ENCODE measurements at regions of chr11 and their contacts with region 1.

Region 1: DNA sequence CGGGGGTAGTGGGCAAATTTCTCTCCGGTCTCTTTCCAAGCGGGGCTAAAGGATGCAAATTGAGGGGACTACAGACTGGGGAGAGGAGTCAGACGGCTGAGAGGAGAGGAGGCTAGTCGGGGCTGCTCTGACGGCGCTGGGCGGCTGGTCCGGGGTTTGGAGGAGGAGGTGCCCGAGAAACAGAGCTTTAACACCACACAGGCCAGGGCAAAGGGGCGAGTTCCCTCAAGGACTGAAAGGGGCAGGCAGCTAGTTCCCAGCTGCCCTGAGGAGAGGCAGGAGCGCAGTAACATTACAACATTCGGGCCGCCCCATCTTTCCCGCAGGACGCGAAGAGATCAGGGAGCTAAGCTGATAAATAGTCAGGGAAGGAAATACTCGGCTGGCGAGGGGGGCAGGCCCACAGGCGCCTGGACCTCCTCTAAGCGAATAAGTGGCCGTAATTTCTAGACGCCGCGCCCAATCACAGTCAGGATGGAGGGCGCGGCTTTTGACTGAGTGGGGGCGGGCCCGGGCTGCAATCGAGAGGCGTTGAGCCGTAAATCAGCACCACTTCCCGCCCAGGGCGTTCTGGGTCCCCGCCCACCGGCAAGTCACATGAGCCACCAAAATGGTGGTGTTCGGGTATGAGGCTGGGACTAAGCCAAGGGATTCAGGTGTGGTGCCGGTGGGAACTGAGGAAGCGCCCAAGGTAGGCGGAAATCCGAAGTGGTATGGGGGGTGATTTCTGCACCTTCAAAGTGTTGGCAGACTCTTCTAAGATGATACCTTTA is at the start of gene TMEM126B:
- DNase-seq: peak; percentile 89
- ATAC-seq: peak; percentile 98
- H3K4me3 Mint-ChIP-seq: peak within 1 kb of the TSS; percentile 99
- H3K27ac Mint-ChIP-seq: peak within 1 kb of the TSS; percentile 94
- H3K4me1 Mint-ChIP-seq: peaks cover 28% of the 10 kb centered on the region
- H3K27me3 Mint-ChIP-seq: peaks cover 2% of the 10 kb centered on the region
- CTCF ChIP-seq: no peak
- total RNA-seq, gene TMEM126B: 35.5 and 43.4 TPM in 2 replicates

Region 2: DNA sequence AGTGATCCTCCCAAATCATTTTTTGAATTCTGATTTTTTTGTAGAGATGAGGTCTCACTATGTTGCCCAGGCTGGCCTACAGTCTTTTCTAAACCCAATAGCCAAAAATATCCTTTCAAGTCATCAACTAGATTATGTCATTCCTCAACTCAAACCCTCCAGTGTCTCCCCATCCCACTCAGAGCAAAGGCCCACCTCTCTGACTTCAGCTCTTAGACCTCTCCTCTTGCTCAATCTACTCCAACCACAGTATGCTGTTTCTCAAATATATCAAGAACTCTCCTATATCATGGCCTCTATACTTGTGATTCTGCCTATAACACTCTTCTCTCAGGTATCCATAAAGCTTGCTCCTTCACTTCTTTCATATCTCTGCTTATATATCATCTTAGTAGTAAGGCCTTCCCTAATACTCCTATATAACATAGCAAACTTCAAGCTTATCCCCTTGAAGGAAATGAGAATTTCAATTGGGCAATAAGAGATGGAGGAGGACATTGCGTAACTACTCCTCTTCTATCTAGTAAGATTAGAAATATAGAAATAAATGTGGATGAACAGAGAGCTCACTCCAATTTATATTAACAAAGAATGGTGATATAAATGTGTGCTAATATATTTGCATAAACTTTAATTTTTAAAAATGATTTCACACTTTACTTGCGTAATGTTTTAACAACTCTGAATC is 25.5 kb before region 1 on chr11:
- CTCF ChIA-PET with region 1: no interaction called
- POLR2A ChIA-PET with region 1: no interaction called
- intact Hi-C with region 1: no loop called
- DNase-seq: no peak
- ATAC-seq: no peak
- H3K4me3 Mint-ChIP-seq: no peak overlapping the region
- H3K27ac Mint-ChIP-seq: no peak overlapping the region
- H3K4me1 Mint-ChIP-seq: no peaks in the 10 kb centered on the region
- H3K27me3 Mint-ChIP-seq: no peaks in the 10 kb centered on the region
- CTCF ChIP-seq: no peak

Region 3: DNA sequence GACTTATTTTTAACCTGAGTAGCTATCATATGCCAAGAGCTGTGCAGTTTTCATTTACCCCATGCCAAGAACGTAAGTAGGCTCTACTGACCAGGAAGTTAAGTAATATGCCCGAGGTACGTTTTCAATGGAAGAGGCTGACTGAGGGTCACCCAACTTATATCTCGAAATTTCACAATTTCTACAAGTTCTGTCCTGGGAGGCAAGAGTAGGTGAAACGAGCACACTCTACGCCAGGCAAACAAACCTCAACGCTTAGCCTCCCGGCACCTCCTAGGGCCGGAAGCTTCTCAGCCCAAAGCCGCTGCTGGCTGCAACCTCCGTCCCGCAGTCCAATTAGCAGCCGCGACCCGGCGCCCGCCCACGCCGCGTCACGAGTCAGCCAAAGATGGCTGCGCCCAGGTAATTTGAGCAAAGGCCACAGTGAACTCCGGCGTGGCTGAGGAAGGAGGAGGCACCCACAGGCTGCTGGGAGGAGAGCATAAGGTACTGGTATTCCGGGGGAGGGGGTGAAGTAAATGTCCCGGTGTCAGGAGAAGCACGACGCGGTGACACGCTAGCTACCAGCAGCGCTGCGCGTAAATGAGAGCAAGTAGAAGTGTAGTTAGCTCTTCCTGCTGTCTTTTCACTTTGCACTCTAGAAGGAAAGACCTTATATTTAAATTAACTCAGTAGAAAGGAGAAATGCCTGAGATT is 19.6 kb after region 1 on chr11 and contains the start of gene TMEM126A:
- CTCF ChIA-PET with region 1: interaction called, 16 read pairs
- POLR2A ChIA-PET with region 1: interaction called, 102 read pairs
- intact Hi-C with region 1: loop called (anchors 1 kb)
- DNase-seq: peak; percentile 77
- ATAC-seq: peak; percentile 99
- H3K4me3 Mint-ChIP-seq: peak within 1 kb of the TSS; percentile 98
- H3K27ac Mint-ChIP-seq: peak within 1 kb of the TSS; percentile 91
- H3K4me1 Mint-ChIP-seq: peaks cover 22% of the 10 kb centered on the region
- H3K27me3 Mint-ChIP-seq: peaks cover 10% of the 10 kb centered on the region
- CTCF ChIP-seq: no peak
- total RNA-seq, gene TMEM126A: 31.9 and 32.7 TPM in 2 replicates

Region 4: GRCh38 chr11:85922367-85922766 is 294.2 kb after region 1 on chr11:
- CTCF ChIA-PET with region 1: no interaction called
- POLR2A ChIA-PET with region 1: no interaction called
- intact Hi-C with region 1: no loop called
- DNase-seq: no peak
- ATAC-seq: no peak
- H3K4me3 Mint-ChIP-seq: no peak overlapping the region
- H3K27ac Mint-ChIP-seq: no peak overlapping the region
- H3K4me1 Mint-ChIP-seq: no peaks in the 10 kb centered on the region
- H3K27me3 Mint-ChIP-seq: peaks cover 20% of the 10 kb centered on the region
- CTCF ChIP-seq: no peak

Region 5: DNA sequence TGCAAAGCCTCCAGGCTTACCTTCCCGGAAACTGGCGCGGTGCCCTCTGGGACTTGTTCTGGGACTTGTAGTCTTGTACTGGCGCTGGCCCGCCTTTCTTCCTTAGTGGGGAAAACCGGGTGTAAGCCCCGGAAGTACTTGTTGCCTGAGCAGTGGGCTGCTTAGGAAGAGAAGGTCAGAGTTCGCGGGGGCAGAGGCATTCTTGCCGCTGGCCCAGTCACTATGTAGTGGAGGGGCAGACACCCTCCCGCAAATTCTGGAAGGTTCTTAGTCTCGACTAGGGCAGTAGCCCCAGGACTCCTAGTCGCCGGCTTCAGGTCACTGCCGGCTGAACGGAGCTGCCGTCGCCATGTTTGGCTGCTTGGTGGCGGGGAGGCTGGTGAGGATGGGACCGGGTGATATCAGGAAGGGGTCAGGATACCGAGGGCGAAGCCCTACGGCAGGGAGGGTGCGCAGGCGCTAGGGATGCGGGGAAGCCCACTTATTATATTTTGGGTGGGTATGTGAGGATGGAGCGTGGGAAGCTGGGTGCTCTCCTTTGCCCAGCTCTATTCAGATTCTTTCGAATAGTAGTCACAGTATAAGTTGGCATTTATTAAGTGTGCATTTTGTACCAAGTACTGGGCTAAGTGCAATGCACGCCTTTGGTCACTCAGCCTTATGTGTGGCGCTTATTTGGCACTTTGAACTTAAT is 674.1 kb after region 1 on chr11 and contains the start of gene HIKESHI:
- CTCF ChIA-PET with region 1: no interaction called
- POLR2A ChIA-PET with region 1: no interaction called
- intact Hi-C with region 1: loop called (anchors 1 kb)
- DNase-seq: peak; percentile 72
- ATAC-seq: peak; percentile 98
- H3K4me3 Mint-ChIP-seq: peak within 1 kb of the TSS; percentile 99
- H3K27ac Mint-ChIP-seq: peak within 1 kb of the TSS; percentile 94
- H3K4me1 Mint-ChIP-seq: peaks cover 27% of the 10 kb centered on the region
- H3K27me3 Mint-ChIP-seq: no peaks in the 10 kb centered on the region
- CTCF ChIP-seq: no peak
- total RNA-seq, gene HIKESHI: 33.8 and 35.6 TPM in 2 replicates

Region 6: GRCh38 chr11:87037450-87038234 is 1409.5 kb after region 1 on chr11 and contains the start of gene TMEM135:
- CTCF ChIA-PET with region 1: no interaction called
- POLR2A ChIA-PET with region 1: no interaction called
- intact Hi-C with region 1: loop called (anchors 1 kb)
- DNase-seq: peak; percentile 91
- ATAC-seq: peak; percentile 96
- H3K4me3 Mint-ChIP-seq: peak within 1 kb of the TSS; percentile 99
- H3K27ac Mint-ChIP-seq: peak within 1 kb of the TSS; percentile 75
- H3K4me1 Mint-ChIP-seq: peaks cover 34% of the 10 kb centered on the region
- H3K27me3 Mint-ChIP-seq: no peaks in the 10 kb centered on the region
- CTCF ChIP-seq: no peak
- total RNA-seq, gene TMEM135: 7.4 and 10.1 TPM in 2 replicates

Measured in activated B cell treated with CpG ODN at 0.5 μM for 24 hours (primary cell).